Sigmoid colon (tissue), 7 donors: ENCODE measurements at regions of chr2 and their contacts with region 1.

Region 1: GRCh38 chr2:46364797-46365457 is 67.7 kb downstream of the EPAS1 start:
- DNase-seq: no peak
- H3K4me3 ChIP-seq: no peak overlapping the region
- H3K27ac ChIP-seq: peak overlapping the region in 1 of 4 donors; percentile 13
- H3K4me1 ChIP-seq: peaks cover 0 to 14% (median 11%) of the 10 kb centered on the region in 4 donors
- H3K27me3 ChIP-seq: no peaks in the 10 kb centered on the region
- CTCF ChIP-seq: peak; percentile 48 to 84 (median 83)
- EP300 ChIP-seq: no peak
- POLR2A ChIP-seq: no peak

Region 2: GRCh38 chr2:45993476-45993991 is 371.4 kb before region 1 on chr2:
- intact Hi-C with region 1: loop called (anchors 5 kb)
- DNase-seq: peak; percentile 76
- H3K4me3 ChIP-seq: no peak overlapping the region
- H3K27ac ChIP-seq: peak overlapping the region in 2 of 4 donors; percentile 69 to 72
- H3K4me1 ChIP-seq: peaks cover 0 to 44% (median 35%) of the 10 kb centered on the region in 4 donors
- H3K27me3 ChIP-seq: no peaks in the 10 kb centered on the region
- CTCF ChIP-seq: peak; percentile 63 to 84 (median 74)
- EP300 ChIP-seq: no peak
- POLR2A ChIP-seq: no peak

Region 3: GRCh38 chr2:46010925-46011490 is 353.9 kb before region 1 on chr2:
- intact Hi-C with region 1: loop called (anchors 1 kb)
- DNase-seq: no peak
- H3K4me3 ChIP-seq: no peak overlapping the region
- H3K27ac ChIP-seq: no peak overlapping the region
- H3K4me1 ChIP-seq: no peaks in the 10 kb centered on the region
- H3K27me3 ChIP-seq: no peaks in the 10 kb centered on the region
- CTCF ChIP-seq: peak in 3 of 4 experiments; percentile 53 to 57 (median 53)
- EP300 ChIP-seq: no peak
- POLR2A ChIP-seq: no peak

Region 4: GRCh38 chr2:46062637-46063412 is 302.1 kb before region 1 on chr2:
- intact Hi-C with region 1: loop called (anchors 2 kb)
- DNase-seq: peak; percentile 92
- H3K4me3 ChIP-seq: no peak overlapping the region
- H3K27ac ChIP-seq: peak overlapping the region in 2 of 4 donors; percentile 30 to 47
- H3K4me1 ChIP-seq: peaks cover 0 to 6% (median 3%) of the 10 kb centered on the region in 4 donors
- H3K27me3 ChIP-seq: no peaks in the 10 kb centered on the region
- CTCF ChIP-seq: peak; percentile 74 to 93 (median 84)
- EP300 ChIP-seq: no peak
- POLR2A ChIP-seq: no peak

Region 5: GRCh38 chr2:46187112-46187618 is 177.8 kb before region 1 on chr2:
- intact Hi-C with region 1: loop called (anchors 10 kb)
- DNase-seq: peak; percentile 83
- H3K4me3 ChIP-seq: peak overlapping the region in 3 of 4 donors; percentile 13 to 34 (median 28)
- H3K27ac ChIP-seq: peak overlapping the region; percentile 61 to 86 (median 82)
- H3K4me1 ChIP-seq: peaks cover 0 to 29% (median 25%) of the 10 kb centered on the region in 4 donors
- H3K27me3 ChIP-seq: no peaks in the 10 kb centered on the region
- CTCF ChIP-seq: no peak
- EP300 ChIP-seq: no peak
- POLR2A ChIP-seq: no peak

Region 6: GRCh38 chr2:46434851-46435273 is 69.9 kb after region 1 on chr2:
- intact Hi-C with region 1: no loop called
- DNase-seq: no peak
- H3K4me3 ChIP-seq: no peak overlapping the region
- H3K27ac ChIP-seq: no peak overlapping the region
- H3K4me1 ChIP-seq: no peaks in the 10 kb centered on the region
- H3K27me3 ChIP-seq: no peaks in the 10 kb centered on the region
- CTCF ChIP-seq: no peak
- EP300 ChIP-seq: no peak
- POLR2A ChIP-seq: no peak